ENCODE measurements at regions of chrX and their contacts with region 1.

Region 1: DNA sequence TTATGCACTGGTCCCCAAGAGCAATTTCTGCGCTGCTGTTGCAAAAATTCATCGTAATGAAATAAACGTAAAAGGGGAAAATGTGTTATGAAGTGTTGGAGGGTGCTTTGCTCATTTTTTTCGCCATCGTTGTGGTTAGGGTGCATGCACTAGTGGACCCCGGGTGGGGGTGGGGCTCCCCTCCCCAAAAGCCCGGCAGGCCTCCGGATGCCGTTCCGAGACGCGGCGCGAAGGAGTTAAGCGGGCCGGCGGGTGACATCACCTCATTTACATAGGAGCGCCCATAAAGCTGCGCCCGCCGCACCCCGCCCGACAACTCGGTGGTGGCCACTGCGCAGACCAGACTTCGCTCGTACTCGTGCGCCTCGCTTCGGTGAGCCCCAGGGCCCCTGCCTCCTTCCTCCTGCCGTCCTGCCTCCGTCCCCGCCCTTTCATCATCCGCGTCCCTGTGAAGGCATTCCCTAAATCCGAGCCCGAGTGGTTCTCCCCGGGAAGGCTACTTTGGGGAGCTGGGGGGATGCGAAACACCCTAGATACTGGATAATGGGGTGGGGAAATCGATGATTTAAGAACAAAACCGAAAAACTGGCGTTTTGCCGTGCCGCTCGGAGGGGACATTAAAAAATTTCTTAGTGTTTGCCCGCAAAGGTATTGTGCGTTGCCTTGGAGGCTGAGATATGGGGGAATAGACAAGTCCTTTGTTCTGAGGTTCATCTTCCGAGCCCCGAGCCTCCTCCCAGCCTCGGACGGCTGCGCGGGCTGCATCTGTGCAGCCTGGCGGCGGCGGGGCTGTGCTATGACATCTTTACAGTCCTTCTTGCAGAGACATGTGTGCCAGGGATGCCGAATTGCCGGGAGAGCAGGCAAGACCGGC is at the start of gene TMSB4X:
- DNase-seq: peak; percentile 83 to 90 (median 88)
- H3K4me3 ChIP-seq: peak within 1 kb of the TSS; percentile 54
- H3K27ac ChIP-seq: peak within 1 kb of the TSS; percentile 84 to 90
- H3K4me1 ChIP-seq: no peaks in the 10 kb centered on the region
- H3K27me3 ChIP-seq: no peaks in the 10 kb centered on the region
- CTCF ChIP-seq: no peak
- EP300 ChIP-seq: no peak
- POLR2A ChIP-seq: peak; percentile 97
- total RNA-seq, gene TMSB4X: 1,993 to 2,559 (median 2,105) TPM

Region 2: DNA sequence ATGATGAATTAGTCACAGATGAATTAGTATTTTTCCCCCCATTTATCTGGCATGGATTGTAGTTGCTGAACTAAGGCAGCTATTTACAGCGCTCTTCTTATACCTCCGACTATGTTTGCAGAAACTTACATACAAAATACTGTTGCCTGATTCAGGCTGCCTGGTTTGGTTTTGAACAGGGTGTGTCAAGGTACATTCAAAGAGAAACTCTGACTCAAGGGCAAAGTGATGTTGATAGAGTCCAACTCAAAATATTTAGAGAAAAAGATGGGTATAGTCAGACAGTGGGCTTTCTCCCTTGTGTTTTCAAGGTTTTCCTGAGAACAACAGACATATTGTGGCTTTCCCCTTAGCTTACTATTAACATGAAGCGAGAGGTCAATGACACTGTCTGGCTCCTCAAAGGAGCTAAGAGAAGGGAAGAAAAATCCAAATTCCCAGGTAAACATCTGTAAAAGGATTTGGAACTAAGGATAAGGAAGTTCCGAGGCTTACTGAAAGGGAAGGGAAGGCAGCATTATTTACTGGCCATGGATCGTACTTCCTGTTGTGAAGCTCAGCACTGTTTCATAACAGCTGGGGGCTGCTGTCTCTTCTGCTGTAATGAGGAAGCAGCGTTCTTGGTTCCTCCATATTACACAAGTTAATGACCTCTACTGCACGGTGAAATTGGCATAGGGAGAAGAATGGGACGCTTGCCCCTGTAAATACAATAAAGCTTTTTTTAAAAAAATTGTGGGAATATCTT is 38.5 kb after region 1 on chrX:
- intact Hi-C with region 1: loop called in 1 of 4 experiments (anchors 1 kb)
- DNase-seq: peak in 2 of 5 donors; percentile 37 to 50
- H3K4me3 ChIP-seq: no peak overlapping the region
- H3K27ac ChIP-seq: peak overlapping the region in 1 of 2 donors; percentile 71
- H3K4me1 ChIP-seq: peaks cover 3% of the 10 kb centered on the region
- H3K27me3 ChIP-seq: no peaks in the 10 kb centered on the region
- CTCF ChIP-seq: no peak
- EP300 ChIP-seq: no peak
- POLR2A ChIP-seq: no peak

Region 3: DNA sequence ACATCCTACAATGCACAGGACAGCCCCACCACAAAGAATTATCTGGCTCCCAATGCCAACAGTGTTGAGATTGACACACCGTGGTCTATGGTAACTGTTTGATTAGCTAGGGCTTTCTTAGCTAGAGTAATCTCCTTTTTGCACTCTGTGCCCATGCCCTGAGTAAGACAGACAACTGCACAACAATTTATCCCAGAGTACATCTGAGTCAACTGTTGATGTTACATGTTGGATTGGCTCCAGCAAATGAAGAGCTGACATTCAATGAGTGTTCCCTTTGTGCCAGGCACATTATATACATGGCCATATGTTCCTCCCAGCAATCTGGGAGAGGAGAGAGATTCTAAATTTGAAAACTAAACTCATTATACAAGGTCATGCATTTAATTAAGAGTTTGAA is 73.2 kb after region 1 on chrX:
- intact Hi-C with region 1: no loop called
- DNase-seq: no peak
- H3K4me3 ChIP-seq: no peak overlapping the region
- H3K27ac ChIP-seq: no peak overlapping the region
- H3K4me1 ChIP-seq: no peaks in the 10 kb centered on the region
- H3K27me3 ChIP-seq: no peaks in the 10 kb centered on the region
- CTCF ChIP-seq: no peak
- EP300 ChIP-seq: no peak
- POLR2A ChIP-seq: no peak

Region 4: GRCh38 chrX:13092455-13092941 is 117.5 kb after region 1 on chrX:
- intact Hi-C with region 1: loop called in 1 of 4 experiments (anchors 10 kb)
- DNase-seq: no peak
- H3K4me3 ChIP-seq: no peak overlapping the region
- H3K27ac ChIP-seq: peak overlapping the region in 1 of 2 donors; percentile 30
- H3K4me1 ChIP-seq: peaks cover 1% of the 10 kb centered on the region
- H3K27me3 ChIP-seq: no peaks in the 10 kb centered on the region
- CTCF ChIP-seq: no peak
- EP300 ChIP-seq: no peak
- POLR2A ChIP-seq: no peak

Region 5: DNA sequence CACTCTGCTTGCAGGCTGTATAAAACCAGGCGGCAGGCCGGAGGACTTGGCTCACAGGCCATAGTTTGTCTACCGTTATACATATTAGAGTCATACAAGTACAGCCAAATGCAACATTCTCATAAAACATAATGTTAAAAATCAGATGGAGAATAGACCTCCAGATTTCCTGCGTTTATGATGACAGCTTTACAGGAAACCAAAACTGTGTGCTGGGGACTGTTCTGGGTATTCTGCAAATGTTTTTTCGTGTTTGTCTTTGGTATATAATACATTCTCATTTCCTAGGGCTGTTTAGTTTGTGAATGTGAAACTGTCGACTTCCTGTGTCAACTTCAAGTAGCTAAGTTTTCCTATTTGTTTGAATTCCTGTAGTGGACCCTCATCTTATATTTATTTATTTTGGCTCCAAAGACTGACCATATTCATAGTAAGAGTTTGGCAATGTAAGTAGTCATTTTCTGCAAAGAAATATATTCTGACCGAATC is 148.9 kb after region 1 on chrX:
- intact Hi-C with region 1: loop called in 1 of 4 experiments (anchors 10 kb)
- DNase-seq: no peak
- H3K4me3 ChIP-seq: no peak overlapping the region
- H3K27ac ChIP-seq: no peak overlapping the region
- H3K4me1 ChIP-seq: peaks cover 3% of the 10 kb centered on the region
- H3K27me3 ChIP-seq: no peaks in the 10 kb centered on the region
- CTCF ChIP-seq: no peak
- EP300 ChIP-seq: no peak
- POLR2A ChIP-seq: no peak

Region 6: GRCh38 chrX:13487731-13488523 is 512.9 kb after region 1 on chrX:
- intact Hi-C with region 1: loop called (anchors 2 to 10 kb)
- DNase-seq: peak; percentile 32 to 52 (median 34)
- H3K4me3 ChIP-seq: no peak overlapping the region
- H3K27ac ChIP-seq: peak overlapping the region in 1 of 2 donors; percentile 34
- H3K4me1 ChIP-seq: peaks cover 5% of the 10 kb centered on the region
- H3K27me3 ChIP-seq: no peaks in the 10 kb centered on the region
- CTCF ChIP-seq: peak in 2 of 3 donors; percentile 79 to 84
- EP300 ChIP-seq: no peak
- POLR2A ChIP-seq: no peak

Measured in ovary (tissue), 10 donors.